Activated CD4-positive, alpha-beta memory T cell treated with anti-CD3 and anti-CD28 coated beads, Interleukin-2, amount 10 ng/mL, durations not matched to agents 7 days and 5 days (primary cell): ENCODE measurements at regions of chr22 and their contacts with region 1.

Region 1: GRCh38 chr22:26744892-26745808 is 87.8 kb downstream of the MIAT start:
- DNase-seq: no peak
- H3K4me3 Mint-ChIP-seq: no peak overlapping the region
- H3K27ac Mint-ChIP-seq: no peak overlapping the region
- H3K4me1 Mint-ChIP-seq: no peaks in the 10 kb centered on the region
- H3K27me3 Mint-ChIP-seq: no peaks in the 10 kb centered on the region

Region 2: GRCh38 chr22:26610072-26610958 is 134.8 kb before region 1 on chr22:
- CTCF ChIA-PET with region 1: no interaction called
- POLR2A ChIA-PET with region 1: no interaction called
- DNase-seq: peak; percentile 84
- H3K4me3 Mint-ChIP-seq: peak overlapping the region; percentile 56
- H3K27ac Mint-ChIP-seq: peak overlapping the region; percentile 85
- H3K4me1 Mint-ChIP-seq: peaks cover 38% of the 10 kb centered on the region
- H3K27me3 Mint-ChIP-seq: peaks cover 22% of the 10 kb centered on the region

Region 3: GRCh38 chr22:26756675-26757293 is 11.6 kb after region 1 on chr22:
- CTCF ChIA-PET with region 1: interaction called, 11 read pairs
- POLR2A ChIA-PET with region 1: no interaction called
- DNase-seq: peak; percentile 27
- H3K4me3 Mint-ChIP-seq: no peak overlapping the region
- H3K27ac Mint-ChIP-seq: no peak overlapping the region
- H3K4me1 Mint-ChIP-seq: peaks cover 1% of the 10 kb centered on the region
- H3K27me3 Mint-ChIP-seq: no peaks in the 10 kb centered on the region

Region 4: GRCh38 chr22:26767351-26768155 is 22.4 kb after region 1 on chr22:
- CTCF ChIA-PET with region 1: no interaction called
- POLR2A ChIA-PET with region 1: no interaction called
- DNase-seq: no peak
- H3K4me3 Mint-ChIP-seq: no peak overlapping the region
- H3K27ac Mint-ChIP-seq: no peak overlapping the region
- H3K4me1 Mint-ChIP-seq: no peaks in the 10 kb centered on the region
- H3K27me3 Mint-ChIP-seq: no peaks in the 10 kb centered on the region

Region 5: GRCh38 chr22:26995235-26995634 is 250.1 kb after region 1 on chr22:
- CTCF ChIA-PET with region 1: no interaction called
- POLR2A ChIA-PET with region 1: no interaction called
- DNase-seq: no peak
- H3K4me3 Mint-ChIP-seq: no peak overlapping the region
- H3K27ac Mint-ChIP-seq: no peak overlapping the region
- H3K4me1 Mint-ChIP-seq: no peaks in the 10 kb centered on the region
- H3K27me3 Mint-ChIP-seq: no peaks in the 10 kb centered on the region